Activated CD8-positive, alpha-beta T cell treated with anti-CD3 and anti-CD28 coated beads, Interleukin-2, amount 10 ng/mL, durations not matched to agents 7 days and 5 days (primary cell): ENCODE measurements at regions of chr2 and their contacts with region 1.

Region 1: GRCh38 chr2:226799181-226799975 is at the start of gene IRS1:
- DNase-seq: peak; percentile 71
- ATAC-seq: peak; percentile 59
- H3K4me3 Mint-ChIP-seq: peak within 1 kb of the TSS; percentile 87
- H3K27ac Mint-ChIP-seq: peak within 1 kb of the TSS; percentile 87
- H3K4me1 Mint-ChIP-seq: peaks cover 53% of the 10 kb centered on the region
- H3K27me3 Mint-ChIP-seq: peaks cover 9% of the 10 kb centered on the region
- total RNA-seq, gene IRS1: 7.3 to 9.6 TPM

Region 2: DNA sequence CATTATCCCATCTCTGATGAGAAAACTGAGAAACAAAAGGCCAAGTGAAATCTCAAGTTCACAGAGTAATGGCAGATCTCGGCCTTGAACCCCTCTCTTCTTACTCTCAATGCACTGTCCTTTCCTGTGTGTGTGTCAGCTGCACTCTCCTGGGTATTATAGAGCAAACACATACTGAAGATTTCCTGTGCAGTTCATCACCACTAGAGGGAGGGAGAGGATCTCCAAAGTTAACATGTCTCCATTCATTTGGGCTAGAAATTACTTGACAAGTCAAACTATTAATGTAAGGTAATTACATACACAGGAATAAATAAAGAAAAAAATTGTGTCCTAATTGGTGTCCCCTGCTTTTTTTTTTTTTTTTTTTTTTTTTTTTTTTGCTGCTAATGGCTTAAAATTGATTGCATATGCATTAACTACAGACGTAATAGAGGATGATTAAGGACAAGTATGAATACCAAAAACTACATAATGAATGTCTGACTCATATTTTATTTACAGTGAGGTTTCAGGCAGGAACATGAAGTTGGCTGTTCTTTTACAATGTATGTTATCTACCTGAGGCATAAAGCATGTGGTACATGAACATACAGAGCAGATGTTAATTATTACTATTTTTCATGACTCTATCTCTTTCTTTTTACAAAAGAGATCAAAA is 1130.6 kb before region 1 on chr2:
- CTCF ChIA-PET with region 1: interaction called, 30 read pairs
- POLR2A ChIA-PET with region 1: no interaction called
- DNase-seq: peak; percentile 37
- ATAC-seq: peak; percentile 90
- H3K4me3 Mint-ChIP-seq: no peak overlapping the region
- H3K27ac Mint-ChIP-seq: no peak overlapping the region
- H3K4me1 Mint-ChIP-seq: no peaks in the 10 kb centered on the region
- H3K27me3 Mint-ChIP-seq: peaks cover 8% of the 10 kb centered on the region

Region 3: DNA sequence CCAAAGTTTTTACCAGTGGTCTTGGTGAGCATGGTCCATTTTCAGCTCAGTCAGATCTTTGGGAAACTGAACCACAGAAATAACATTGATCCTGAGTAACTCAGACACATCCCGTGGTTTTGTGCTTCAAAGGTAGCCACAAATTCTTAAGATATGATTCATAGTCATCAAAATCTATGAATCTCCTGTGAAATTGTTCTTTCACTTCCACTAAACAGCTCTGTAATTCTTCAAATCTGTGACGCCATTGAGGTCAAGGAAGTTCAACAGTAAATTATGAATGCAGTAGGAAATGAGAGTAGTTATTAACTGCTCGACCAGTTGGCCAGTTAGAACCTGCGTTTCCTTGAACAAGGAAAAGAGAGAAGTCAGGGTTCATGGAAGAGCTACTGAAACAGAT is 147.0 kb before region 1 on chr2:
- CTCF ChIA-PET with region 1: interaction called, 14 read pairs
- POLR2A ChIA-PET with region 1: no interaction called
- DNase-seq: no peak
- ATAC-seq: peak; percentile 25
- H3K4me3 Mint-ChIP-seq: no peak overlapping the region
- H3K27ac Mint-ChIP-seq: no peak overlapping the region
- H3K4me1 Mint-ChIP-seq: peaks cover 54% of the 10 kb centered on the region
- H3K27me3 Mint-ChIP-seq: no peaks in the 10 kb centered on the region

Region 4: GRCh38 chr2:226813148-226813701 is 13.8 kb after region 1 on chr2:
- CTCF ChIA-PET with region 1: interaction called, 12 read pairs
- POLR2A ChIA-PET with region 1: interaction called, 3 read pairs
- DNase-seq: no peak
- ATAC-seq: no peak
- H3K4me3 Mint-ChIP-seq: no peak overlapping the region
- H3K27ac Mint-ChIP-seq: no peak overlapping the region
- H3K4me1 Mint-ChIP-seq: no peaks in the 10 kb centered on the region
- H3K27me3 Mint-ChIP-seq: peaks cover 20% of the 10 kb centered on the region

Region 5: GRCh38 chr2:226835796-226836547 is 36.6 kb after region 1 on chr2 and contains the start of gene RHBDD1:
- CTCF ChIA-PET with region 1: interaction called, 22 read pairs
- POLR2A ChIA-PET with region 1: interaction called, 25 read pairs
- DNase-seq: peak; percentile 96
- ATAC-seq: peak; percentile 90
- H3K4me3 Mint-ChIP-seq: peak within 1 kb of the TSS; percentile 88
- H3K27ac Mint-ChIP-seq: peak within 1 kb of the TSS; percentile 99
- H3K4me1 Mint-ChIP-seq: peaks cover 62% of the 10 kb centered on the region
- H3K27me3 Mint-ChIP-seq: no peaks in the 10 kb centered on the region
- total RNA-seq, gene RHBDD1: 23.4 to 29.5 TPM

Region 6: GRCh38 chr2:226887940-226888339 is 88.6 kb after region 1 on chr2:
- CTCF ChIA-PET with region 1: no interaction called
- POLR2A ChIA-PET with region 1: no interaction called
- DNase-seq: no peak
- ATAC-seq: no peak
- H3K4me3 Mint-ChIP-seq: no peak overlapping the region
- H3K27ac Mint-ChIP-seq: no peak overlapping the region
- H3K4me1 Mint-ChIP-seq: no peaks in the 10 kb centered on the region
- H3K27me3 Mint-ChIP-seq: no peaks in the 10 kb centered on the region